Activated B cell treated with CpG ODN at 0.5 μM for 24 hours (primary cell): ENCODE measurements at regions of chr20 and their contacts with region 1.

Region 1: DNA sequence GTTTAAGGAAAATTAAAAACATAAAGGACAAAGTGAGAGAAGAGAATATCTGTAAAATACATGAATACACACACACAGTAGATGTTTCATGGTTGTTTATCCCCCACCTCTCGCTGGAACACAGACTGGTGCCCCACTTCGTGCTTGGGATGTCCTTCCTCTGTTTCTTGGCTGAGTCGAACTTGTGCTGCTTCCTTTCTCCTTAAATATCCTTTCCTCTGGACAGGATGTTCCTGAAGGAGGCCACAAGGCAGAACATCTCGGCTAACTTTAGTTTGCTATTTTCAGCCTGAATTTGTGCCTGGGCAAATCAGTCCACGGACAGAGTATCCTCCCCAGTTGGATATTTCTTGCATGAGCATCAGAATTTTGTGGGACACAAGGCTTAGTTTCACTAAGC is 54.7 kb upstream of the ZMYND8 start:
- DNase-seq: no peak
- ATAC-seq: no peak
- H3K4me3 Mint-ChIP-seq: peak overlapping the region; percentile 81
- H3K27ac Mint-ChIP-seq: peak overlapping the region; percentile 100
- H3K4me1 Mint-ChIP-seq: peaks cover 85% of the 10 kb centered on the region
- H3K27me3 Mint-ChIP-seq: no peaks in the 10 kb centered on the region
- CTCF ChIP-seq: no peak

Region 2: DNA sequence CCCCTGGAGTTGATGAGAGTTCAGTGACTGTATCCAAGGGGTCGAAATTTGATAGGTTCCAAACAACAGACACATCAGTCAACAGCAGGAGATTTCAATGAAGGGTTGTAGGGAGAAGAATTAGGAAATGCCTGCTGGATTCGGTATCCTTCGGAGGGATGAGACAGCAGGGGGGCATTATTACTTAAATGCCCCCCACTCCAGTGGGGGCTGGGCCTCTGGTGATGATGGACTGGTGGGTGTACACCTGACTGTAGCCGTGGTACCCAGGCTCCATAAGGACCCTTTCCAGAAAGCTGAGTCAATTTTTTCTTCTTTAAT is 95.9 kb before region 1 on chr20:
- CTCF ChIA-PET with region 1: no interaction called
- POLR2A ChIA-PET with region 1: no interaction called
- intact Hi-C with region 1: no loop called
- DNase-seq: no peak
- ATAC-seq: no peak
- H3K4me3 Mint-ChIP-seq: no peak overlapping the region
- H3K27ac Mint-ChIP-seq: no peak overlapping the region
- H3K4me1 Mint-ChIP-seq: peaks cover 54% of the 10 kb centered on the region
- H3K27me3 Mint-ChIP-seq: no peaks in the 10 kb centered on the region
- CTCF ChIP-seq: no peak

Region 3: GRCh38 chr20:47438577-47439381 is 27.6 kb after region 1 on chr20:
- CTCF ChIA-PET with region 1: no interaction called
- POLR2A ChIA-PET with region 1: interaction called, 203 read pairs
- intact Hi-C with region 1: loop called (anchors 1 kb)
- DNase-seq: peak; percentile 30
- ATAC-seq: peak; percentile 68
- H3K4me3 Mint-ChIP-seq: peak overlapping the region; percentile 42
- H3K27ac Mint-ChIP-seq: peak overlapping the region; percentile 91
- H3K4me1 Mint-ChIP-seq: peaks cover 52% of the 10 kb centered on the region
- H3K27me3 Mint-ChIP-seq: no peaks in the 10 kb centered on the region
- CTCF ChIP-seq: no peak

Region 4: GRCh38 chr20:47475419-47476044 is 64.4 kb after region 1 on chr20:
- CTCF ChIA-PET with region 1: interaction called, 4 read pairs
- POLR2A ChIA-PET with region 1: interaction called, 142 read pairs
- intact Hi-C with region 1: loop called (anchors 1 kb)
- DNase-seq: no peak
- ATAC-seq: no peak
- H3K4me3 Mint-ChIP-seq: no peak overlapping the region
- H3K27ac Mint-ChIP-seq: peak overlapping the region; percentile 95
- H3K4me1 Mint-ChIP-seq: peaks cover 58% of the 10 kb centered on the region
- H3K27me3 Mint-ChIP-seq: no peaks in the 10 kb centered on the region
- CTCF ChIP-seq: no peak

Region 5: DNA sequence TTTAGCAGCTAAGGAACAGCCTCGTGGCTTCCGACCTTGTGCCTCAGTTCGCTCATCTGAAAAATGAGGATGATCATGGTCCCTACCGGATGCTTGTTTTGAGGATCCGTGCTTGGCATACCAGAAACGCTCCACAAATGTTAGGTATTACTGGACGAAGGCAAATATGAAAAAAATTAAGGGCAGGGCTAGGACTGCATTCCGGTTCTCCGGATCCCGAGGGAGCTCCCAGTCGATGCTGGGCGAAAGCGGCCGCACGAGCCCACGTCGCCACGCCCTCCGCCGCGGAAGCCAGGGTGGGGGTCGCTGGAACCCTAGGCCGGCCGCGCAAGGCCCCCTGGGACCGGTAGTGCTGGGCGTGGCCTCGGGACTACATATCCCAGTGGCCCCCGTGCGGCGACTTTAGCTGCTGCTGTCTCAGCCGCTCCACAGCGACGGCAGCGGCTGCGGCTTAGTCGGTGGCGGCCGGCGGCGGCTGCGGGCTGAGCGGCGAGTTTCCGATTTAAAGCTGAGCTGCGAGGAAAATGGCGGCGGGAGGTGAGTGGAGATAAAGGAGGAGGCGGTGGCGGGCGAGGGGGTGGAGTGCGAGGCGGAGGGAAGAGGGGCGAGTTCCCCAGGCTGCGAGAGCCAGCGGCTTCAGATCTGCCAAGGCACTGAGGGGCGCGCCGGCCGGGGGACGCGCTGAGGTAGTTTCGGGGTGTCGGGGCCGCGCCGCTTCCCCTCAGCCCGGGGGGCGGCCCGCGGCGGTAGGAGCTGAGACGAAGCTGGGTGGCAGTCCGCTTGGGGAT is 90.5 kb after region 1 on chr20 and contains the start of gene NCOA3:
- CTCF ChIA-PET with region 1: interaction called, 11 read pairs
- POLR2A ChIA-PET with region 1: interaction called, 234 read pairs
- intact Hi-C with region 1: loop called (anchors 1 kb)
- DNase-seq: peak; percentile 89
- ATAC-seq: peak; percentile 89
- H3K4me3 Mint-ChIP-seq: peak within 1 kb of the TSS; percentile 100
- H3K27ac Mint-ChIP-seq: peak within 1 kb of the TSS; percentile 98
- H3K4me1 Mint-ChIP-seq: peaks cover 59% of the 10 kb centered on the region
- H3K27me3 Mint-ChIP-seq: no peaks in the 10 kb centered on the region
- CTCF ChIP-seq: no peak
- total RNA-seq, gene NCOA3: 186 and 187 TPM in 2 replicates

Region 6: DNA sequence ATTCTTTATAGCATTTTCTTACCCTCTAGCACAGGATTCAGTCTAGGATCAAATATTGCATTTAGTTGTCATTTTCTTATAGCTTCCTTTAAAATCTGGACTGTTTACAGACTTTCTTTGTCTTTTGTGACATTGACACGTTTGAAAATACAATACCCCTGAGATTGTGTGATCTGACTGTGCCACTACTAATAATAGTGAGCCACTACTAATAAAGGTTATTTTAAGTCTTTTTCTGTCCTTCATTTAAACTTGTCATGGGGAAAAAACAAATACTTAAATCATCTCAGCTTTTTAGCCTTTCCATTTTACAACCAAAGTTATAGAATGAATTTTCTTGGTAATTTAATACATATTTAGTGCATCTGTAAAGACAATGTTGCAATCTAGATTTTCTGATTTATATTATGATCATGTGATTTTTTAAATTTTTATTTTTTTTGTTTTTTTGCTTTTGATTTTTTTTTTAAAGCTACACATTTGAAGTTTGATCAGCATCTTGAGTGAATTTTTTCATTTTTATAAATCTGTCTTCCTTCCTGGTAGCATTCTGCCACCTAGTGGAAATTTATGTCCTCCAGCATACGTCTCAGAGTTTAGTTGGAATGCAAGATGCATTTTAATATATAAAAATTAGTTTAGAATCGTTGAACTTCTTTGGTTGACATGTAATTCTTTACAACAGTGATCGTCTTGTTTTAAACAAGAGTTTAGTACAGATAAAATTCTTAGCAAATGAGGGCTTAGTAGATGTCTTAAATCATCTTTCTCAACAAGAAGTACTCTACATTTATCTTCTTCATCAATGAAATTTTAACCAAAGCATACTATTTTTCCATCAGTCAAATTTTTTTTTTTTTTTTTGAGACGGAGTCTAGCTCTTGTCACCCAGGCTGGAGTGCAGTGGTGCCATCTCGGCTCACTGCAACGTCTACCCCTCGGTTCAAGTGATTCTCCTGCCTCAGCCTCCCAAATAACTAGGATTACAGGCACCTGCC is 209.9 kb after region 1 on chr20:
- CTCF ChIA-PET with region 1: interaction called, 10 read pairs
- POLR2A ChIA-PET with region 1: interaction called, 4 read pairs
- intact Hi-C with region 1: loop called (anchors 1 kb)
- DNase-seq: no peak
- ATAC-seq: peak; percentile 58
- H3K4me3 Mint-ChIP-seq: no peak overlapping the region
- H3K27ac Mint-ChIP-seq: peak overlapping the region; percentile 68
- H3K4me1 Mint-ChIP-seq: peaks cover 32% of the 10 kb centered on the region
- H3K27me3 Mint-ChIP-seq: no peaks in the 10 kb centered on the region
- CTCF ChIP-seq: peak; percentile 29